CD4-positive, alpha-beta memory T cell (primary cell): ENCODE measurements at regions of chr7 and their contacts with region 1.

Region 1: DNA sequence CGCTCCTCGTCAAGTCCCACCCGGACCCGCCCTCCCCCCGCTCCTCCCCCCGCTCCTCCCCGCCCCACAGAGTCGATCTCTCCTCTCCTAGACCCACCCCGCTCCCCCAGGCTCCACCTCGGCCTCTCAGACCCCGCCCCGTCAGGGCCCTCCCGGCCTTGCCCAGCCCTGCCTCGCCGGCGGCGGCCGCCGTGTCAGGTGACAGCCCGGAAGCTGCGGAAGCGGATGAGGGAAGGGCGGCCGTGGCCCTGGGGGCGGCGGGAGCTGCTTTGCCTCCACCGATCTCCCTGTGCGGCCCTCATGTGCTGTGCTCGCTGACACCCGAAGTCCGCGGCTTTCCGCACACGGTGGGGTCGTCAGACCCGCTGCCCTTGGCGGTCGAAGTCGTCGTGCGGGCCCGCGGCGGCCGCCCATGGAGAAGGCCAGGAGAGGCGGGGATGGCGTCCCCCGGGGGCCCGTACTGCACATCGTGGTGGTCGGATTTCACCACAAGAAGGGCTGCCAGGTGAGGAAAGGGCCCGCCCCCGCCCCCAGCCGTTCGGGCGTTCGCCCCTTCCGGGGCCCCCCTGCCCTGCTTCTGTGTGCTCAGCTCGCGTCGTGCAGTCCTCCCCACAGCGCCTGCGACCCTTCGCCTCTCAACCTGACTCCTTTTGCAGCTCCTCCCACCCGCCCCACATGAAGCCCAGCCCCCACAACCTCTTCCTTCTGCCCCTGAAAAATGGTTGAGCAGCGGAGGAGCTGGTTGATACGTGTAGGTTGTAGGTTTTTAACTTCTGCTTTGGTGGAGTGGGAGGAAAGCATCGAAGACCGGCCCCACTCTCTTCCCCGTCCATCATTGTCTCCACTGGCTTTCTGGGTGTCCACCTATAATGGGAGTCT is at the start of gene AVL9:
- DNase-seq: peak; percentile 98 to 99 (median 98)
- H3K4me3 ChIP-seq: peak within 1 kb of the TSS; percentile 76 to 77
- H3K4me3 Mint-ChIP-seq: peak within 1 kb of the TSS; percentile 88 to 99 (median 96)
- H3K27ac ChIP-seq: peak within 1 kb of the TSS; percentile 90
- H3K27ac Mint-ChIP-seq: peak within 1 kb of the TSS; percentile 90 to 99 (median 98)
- H3K4me1 ChIP-seq: peaks cover 51% of the 10 kb centered on the region
- H3K4me1 Mint-ChIP-seq: peaks cover 25 to 53% (median 35%) of the 10 kb centered on the region in 4 donors
- H3K27me3 ChIP-seq: no peaks in the 10 kb centered on the region
- H3K27me3 Mint-ChIP-seq: no peaks in the 10 kb centered on the region
- total RNA-seq, gene AVL9: 39.1 to 40.6 TPM

Region 2: GRCh38 chr7:32611201-32612099 is 115.9 kb after region 1 on chr7:
- CTCF ChIA-PET with region 1: no interaction called
- POLR2A ChIA-PET with region 1: no interaction called
- intact Hi-C with region 1: no loop called
- DNase-seq: no peak
- H3K4me3 ChIP-seq: no peak overlapping the region
- H3K4me3 Mint-ChIP-seq: no peak overlapping the region
- H3K27ac ChIP-seq: no peak overlapping the region
- H3K27ac Mint-ChIP-seq: peak overlapping the region in 1 of 7 donors; percentile 39
- H3K4me1 ChIP-seq: no peaks in the 10 kb centered on the region
- H3K4me1 Mint-ChIP-seq: no peaks in the 10 kb centered on the region
- H3K27me3 ChIP-seq: no peaks in the 10 kb centered on the region
- H3K27me3 Mint-ChIP-seq: peaks cover 0 to 2% of the 10 kb centered on the region in 2 donors

Region 3: DNA sequence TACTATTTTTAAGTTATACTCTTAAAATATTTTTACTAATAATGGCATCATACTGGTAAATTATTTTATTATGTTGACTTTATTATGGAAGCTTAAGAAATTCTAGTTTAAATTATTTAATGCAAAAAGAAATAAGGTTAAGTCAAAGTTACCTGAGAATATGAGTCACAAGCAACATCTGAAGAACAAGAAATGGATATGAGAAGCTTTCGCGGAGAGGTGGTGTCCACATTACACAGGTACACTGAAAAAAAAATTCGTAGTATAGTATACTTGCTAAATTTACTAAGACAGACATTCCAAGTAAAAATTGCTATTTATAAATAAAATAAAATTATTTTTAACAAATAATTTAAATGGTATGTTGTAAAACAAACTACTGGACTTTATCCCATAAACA is 143.6 kb after region 1 on chr7:
- CTCF ChIA-PET with region 1: no interaction called
- POLR2A ChIA-PET with region 1: no interaction called
- intact Hi-C with region 1: loop called (anchors 10 kb)
- DNase-seq: no peak
- H3K4me3 ChIP-seq: no peak overlapping the region
- H3K4me3 Mint-ChIP-seq: no peak overlapping the region
- H3K27ac ChIP-seq: no peak overlapping the region
- H3K27ac Mint-ChIP-seq: no peak overlapping the region
- H3K4me1 ChIP-seq: peaks cover 4% of the 10 kb centered on the region
- H3K4me1 Mint-ChIP-seq: peaks cover 0 to 5% (median 0%) of the 10 kb centered on the region in 4 donors
- H3K27me3 ChIP-seq: no peaks in the 10 kb centered on the region
- H3K27me3 Mint-ChIP-seq: peaks cover 6 to 10% of the 10 kb centered on the region in 2 donors

Region 4: DNA sequence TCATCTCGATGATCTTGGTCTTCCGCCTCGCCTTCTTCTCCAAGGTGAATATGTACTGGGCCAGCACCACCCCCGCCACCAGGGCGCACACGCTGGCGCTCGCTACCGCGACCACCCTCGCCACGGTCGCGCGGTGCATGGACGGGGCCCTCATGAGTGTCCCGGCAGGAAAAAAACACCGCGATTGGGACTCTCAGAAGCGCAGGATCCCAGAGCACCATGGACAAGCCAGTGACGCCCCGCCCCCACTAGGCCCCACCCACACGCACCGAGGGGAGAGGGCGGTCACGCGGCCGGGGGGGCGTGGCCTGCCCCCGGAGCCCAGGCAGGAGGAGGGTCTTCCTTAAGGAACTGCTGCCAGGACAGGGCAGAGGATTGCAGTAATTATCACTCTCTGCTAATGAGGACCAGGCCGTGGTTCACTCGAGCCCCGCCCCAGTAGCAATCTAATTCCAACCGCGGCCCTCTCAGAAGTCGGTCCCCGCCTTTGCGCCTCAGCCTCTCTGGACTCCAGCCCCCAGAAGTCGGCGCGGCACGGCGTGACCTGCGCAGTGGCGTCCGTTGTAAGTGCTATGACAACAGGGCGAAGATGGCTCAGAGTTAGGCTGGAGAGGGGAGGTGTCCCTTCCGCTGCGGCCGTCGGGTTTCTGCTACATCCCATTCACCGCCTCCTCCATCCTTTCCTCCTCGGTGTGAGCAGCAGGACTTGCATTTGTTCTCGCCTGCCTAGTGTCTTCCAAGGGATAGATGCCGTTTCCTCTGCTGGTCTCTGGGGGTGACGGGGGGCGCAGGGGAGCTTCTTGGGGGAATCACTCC is 633.7 kb after region 1 on chr7 and contains the start of gene BBS9:
- CTCF ChIA-PET with region 1: no interaction called
- POLR2A ChIA-PET with region 1: interaction called, 6 read pairs
- intact Hi-C with region 1: loop called (anchors 1 kb)
- DNase-seq: peak; percentile 89 to 93 (median 90)
- H3K4me3 ChIP-seq: peak within 1 kb of the TSS; percentile 74 to 81
- H3K4me3 Mint-ChIP-seq: peak within 1 kb of the TSS; percentile 96 to 98 (median 97)
- H3K27ac ChIP-seq: peak within 1 kb of the TSS; percentile 66
- H3K27ac Mint-ChIP-seq: peak within 1 kb of the TSS; percentile 88 to 97 (median 96)
- H3K4me1 ChIP-seq: peaks cover 15% of the 10 kb centered on the region
- H3K4me1 Mint-ChIP-seq: peaks cover 14 to 27% (median 15%) of the 10 kb centered on the region in 4 donors
- H3K27me3 ChIP-seq: no peaks in the 10 kb centered on the region
- H3K27me3 Mint-ChIP-seq: peaks cover 0 to 4% of the 10 kb centered on the region in 2 donors
- total RNA-seq, gene BBS9: 27.0 to 27.3 TPM